ENCODE measurements at regions of chr18 and their contacts with region 1.

Region 1: GRCh38 chr18:51110073-51110803 is 80.2 kb downstream of the SMAD4 start:
- DNase-seq: peak; percentile 53 to 81 (median 72)
- H3K4me3 ChIP-seq: no peak overlapping the region
- H3K27ac ChIP-seq: no peak overlapping the region
- H3K4me1 ChIP-seq: peaks cover 0 to 3% of the 10 kb centered on the region in 2 donors
- H3K27me3 ChIP-seq: no peaks in the 10 kb centered on the region
- CTCF ChIP-seq: peak; percentile 88 to 98 (median 94)
- POLR2A ChIP-seq: no peak

Region 2: DNA sequence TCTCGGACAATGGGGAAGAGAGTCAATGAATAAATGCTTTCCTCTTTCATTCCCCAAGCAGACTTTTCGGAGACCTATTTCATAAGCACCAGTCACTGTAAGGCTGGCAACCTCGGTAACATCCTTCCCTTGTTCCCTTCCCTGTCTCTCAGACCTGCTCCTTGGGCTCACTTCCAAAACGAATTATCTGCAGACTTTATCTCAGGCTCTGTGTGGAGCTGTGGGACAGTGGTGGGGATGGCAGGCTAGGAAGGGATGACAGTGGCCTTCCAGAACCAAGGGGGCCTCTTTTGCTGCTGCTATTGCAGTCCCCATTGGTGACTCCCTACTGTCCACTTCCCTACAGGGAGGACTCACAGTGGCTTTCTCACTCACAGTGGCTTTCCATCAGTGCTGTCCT is 272.9 kb after region 1 on chr18:
- intact Hi-C with region 1: loop called (anchors 5 to 10 kb)
- DNase-seq: no peak
- H3K4me3 ChIP-seq: no peak overlapping the region
- H3K27ac ChIP-seq: no peak overlapping the region
- H3K4me1 ChIP-seq: no peaks in the 10 kb centered on the region
- H3K27me3 ChIP-seq: no peaks in the 10 kb centered on the region
- CTCF ChIP-seq: no peak
- POLR2A ChIP-seq: no peak

Region 3: DNA sequence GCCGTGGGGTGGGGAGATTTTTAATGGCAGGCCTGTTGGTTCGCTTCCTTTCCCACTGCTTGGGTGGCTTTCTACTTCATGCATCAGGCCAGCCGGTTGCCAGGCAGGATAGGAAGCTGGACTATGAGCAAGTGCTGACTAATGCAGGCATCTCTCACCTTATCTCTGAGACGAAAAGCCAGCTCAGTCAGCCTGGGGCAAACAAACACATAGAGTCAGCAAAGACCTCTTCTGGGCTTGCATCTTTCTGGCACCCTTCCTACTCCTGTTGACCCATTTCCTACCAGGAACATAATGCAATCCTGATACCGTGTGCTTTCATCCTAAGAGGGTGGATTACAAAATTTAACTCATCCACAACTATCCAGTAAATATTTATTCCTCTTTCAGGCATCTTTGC is 503.8 kb after region 1 on chr18:
- intact Hi-C with region 1: loop called in 1 of 2 experiments (anchors 10 kb)
- DNase-seq: peak; percentile 55 to 89 (median 85)
- H3K4me3 ChIP-seq: no peak overlapping the region
- H3K27ac ChIP-seq: no peak overlapping the region
- H3K4me1 ChIP-seq: no peaks in the 10 kb centered on the region
- H3K27me3 ChIP-seq: no peaks in the 10 kb centered on the region
- CTCF ChIP-seq: no peak
- POLR2A ChIP-seq: no peak

Measured in adrenal gland (tissue), 19 donors.